ENCODE measurements at regions of chr12 and their contacts with region 1.

Region 1: DNA sequence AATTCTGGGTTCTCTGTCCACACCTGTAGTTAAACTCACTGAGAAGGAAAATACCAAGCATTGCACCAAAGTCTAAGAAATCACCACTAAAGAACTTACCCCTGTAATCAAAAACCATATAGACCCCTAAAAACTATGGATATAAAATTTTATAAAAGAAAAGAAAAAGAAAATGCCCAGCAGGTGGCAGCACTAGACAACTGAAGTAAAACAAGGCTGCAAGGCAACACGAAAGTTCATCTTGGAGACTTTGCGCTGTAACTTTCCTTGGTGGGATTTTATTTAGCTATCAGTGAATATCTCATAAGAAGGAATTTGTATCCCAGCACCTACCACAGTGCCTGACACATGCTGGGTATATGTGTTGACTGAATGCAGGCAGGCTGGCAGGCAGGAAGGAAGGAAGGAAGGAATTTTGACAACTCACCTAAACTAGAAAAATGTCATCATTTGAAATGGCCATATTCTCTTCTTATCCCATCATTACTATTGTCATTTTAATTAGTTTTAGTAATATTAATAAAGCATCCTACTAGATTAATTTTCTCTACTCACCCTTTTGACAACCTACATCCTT is 68.2 kb upstream of the ETV6 start:
- DNase-seq: peak; percentile 51

Region 2: DNA sequence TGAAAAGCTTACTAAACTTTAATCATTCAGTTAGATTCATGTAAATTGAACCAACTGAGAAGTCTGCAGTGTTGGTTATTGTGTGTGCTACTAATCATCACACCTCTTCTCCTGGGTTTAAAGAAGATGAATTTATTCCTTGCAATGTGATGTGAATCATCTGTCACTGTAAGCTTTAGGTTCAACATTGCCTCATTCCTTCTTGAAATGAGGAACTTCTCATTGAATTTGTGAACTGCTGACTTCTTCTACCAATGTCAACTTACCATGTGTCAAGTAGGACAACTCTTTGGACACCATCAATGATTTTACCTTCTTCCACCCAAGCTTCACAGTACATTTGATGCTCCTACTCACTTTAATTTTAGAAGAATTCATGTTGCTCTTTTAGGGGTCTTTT is 168.5 kb before region 1 on chr12:
- CTCF ChIA-PET with region 1: no interaction called
- POLR2A ChIA-PET with region 1: no interaction called
- DNase-seq: no peak

Region 3: GRCh38 chr12:12032851-12033588 is 451.8 kb after region 1 on chr12:
- CTCF ChIA-PET with region 1: interaction called, 52 read pairs
- POLR2A ChIA-PET with region 1: no interaction called
- DNase-seq: peak; percentile 71

Measured in HEK293T (cell line).